ENCODE measurements at regions of chr18 and their contacts with region 1.

Region 1: GRCh38 chr18:647304-647703 is 10.1 kb upstream of the TYMS start:
- DNase-seq: no peak
- ATAC-seq: no peak
- H3K4me3 Mint-ChIP-seq: no peak overlapping the region
- H3K27ac Mint-ChIP-seq: no peak overlapping the region
- H3K4me1 Mint-ChIP-seq: peaks cover 17% of the 10 kb centered on the region
- H3K27me3 Mint-ChIP-seq: peaks cover 12% of the 10 kb centered on the region

Region 2: DNA sequence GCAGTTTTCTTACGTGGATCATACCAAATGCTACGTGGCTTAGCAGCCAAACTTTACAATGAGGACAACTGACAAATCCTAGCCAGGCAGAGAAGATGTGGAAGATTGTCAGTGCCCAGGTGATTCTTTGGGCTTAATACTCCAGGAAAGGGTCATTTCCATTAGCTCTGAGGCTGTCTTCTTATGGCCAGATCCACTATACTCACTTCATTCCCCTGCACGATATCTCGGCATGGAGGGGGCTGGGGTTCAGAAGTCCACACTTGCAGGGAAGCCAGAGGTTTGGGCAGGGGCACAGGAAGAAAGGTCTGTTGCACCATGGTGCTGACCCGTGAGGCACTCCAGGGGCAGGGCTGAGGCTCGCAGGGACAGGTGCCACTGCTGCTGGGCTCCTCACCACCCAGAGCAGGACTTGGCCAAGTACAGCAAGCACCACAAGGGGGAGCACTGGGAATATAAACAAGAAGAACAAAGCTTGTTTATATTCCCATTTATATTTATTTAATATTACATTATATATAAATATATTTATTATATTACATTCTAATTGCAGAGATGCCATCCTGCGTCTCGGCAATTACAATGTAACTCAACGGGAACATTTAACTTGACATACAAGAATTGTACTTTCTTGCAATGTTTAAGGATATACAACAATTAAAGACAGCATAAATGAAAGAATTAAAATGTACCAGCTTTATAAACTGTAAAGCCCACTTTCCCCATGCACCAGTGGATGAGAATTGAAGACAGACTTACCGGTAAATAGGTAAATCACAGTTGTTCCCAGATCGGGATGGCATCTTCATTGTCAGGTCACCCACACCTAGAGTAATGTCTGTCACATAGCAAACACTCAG is 23.3 kb before region 1 on chr18:
- CTCF ChIA-PET with region 1: interaction called, 10 read pairs
- POLR2A ChIA-PET with region 1: no interaction called
- DNase-seq: peak; percentile 80
- ATAC-seq: peak; percentile 89
- H3K4me3 Mint-ChIP-seq: no peak overlapping the region
- H3K27ac Mint-ChIP-seq: no peak overlapping the region
- H3K4me1 Mint-ChIP-seq: peaks cover 2% of the 10 kb centered on the region
- H3K27me3 Mint-ChIP-seq: peaks cover 31% of the 10 kb centered on the region

Region 3: GRCh38 chr18:712401-713134 is 65.3 kb after region 1 on chr18 and contains the start of gene ENOSF1:
- CTCF ChIA-PET with region 1: no interaction called
- POLR2A ChIA-PET with region 1: no interaction called
- DNase-seq: peak; percentile 88
- ATAC-seq: peak; percentile 89
- H3K4me3 Mint-ChIP-seq: peak within 1 kb of the TSS; percentile 88
- H3K27ac Mint-ChIP-seq: peak within 1 kb of the TSS; percentile 93
- H3K4me1 Mint-ChIP-seq: peaks cover 51% of the 10 kb centered on the region
- H3K27me3 Mint-ChIP-seq: no peaks in the 10 kb centered on the region
- total RNA-seq, gene ENOSF1: 66.0 to 74.1 TPM

Measured in activated CD8-positive, alpha-beta T cell treated with anti-CD3 and anti-CD28 coated beads, Interleukin-2, amount 10 ng/mL, durations not matched to agents 7 days and 5 days (primary cell).